HCT116 (cell line): ENCODE measurements at regions of chr10 and their contacts with region 1.

Region 1: GRCh38 chr10:50624866-50625692 is 1.3 kb upstream of the SGMS1 start:
- DNase-seq: peak; percentile 41
- ATAC-seq: peak; percentile 71
- H3K4me3 ChIP-seq: peak overlapping the region; percentile 64 to 85
- H3K27ac ChIP-seq: peak overlapping the region; percentile 96
- H3K4me1 ChIP-seq: peaks cover 16 to 27% of the 10 kb centered on the region in 2 experiments
- H3K27me3 ChIP-seq: no peaks in the 10 kb centered on the region
- CTCF ChIP-seq: peak; percentile 17 to 53 (median 46); a peak in 4 of 6 replicates
- POLR2A ChIP-seq: peak; percentile 78
- RAD21 ChIP-seq: peak; percentile 30; the same call in 1 of the 2 replicates

Region 2: DNA sequence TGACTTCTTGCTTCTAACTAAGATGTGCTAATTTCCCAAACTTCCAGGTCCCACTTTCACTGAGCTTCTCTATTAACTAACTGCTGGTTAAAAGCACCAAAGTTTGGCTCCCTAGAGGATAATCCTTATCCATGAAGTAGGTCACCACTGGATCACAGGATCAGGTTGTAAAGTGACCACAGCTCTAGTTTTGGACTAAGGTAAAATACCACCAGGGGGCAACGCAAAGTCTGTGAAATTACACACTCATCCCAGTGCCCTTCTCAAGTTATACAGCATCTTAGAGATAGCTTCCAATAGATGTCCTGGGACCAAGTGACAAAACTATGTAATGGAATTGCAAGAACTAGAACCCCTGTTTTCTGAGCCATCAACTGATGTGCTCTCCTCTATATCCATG is 257.3 kb before region 1 on chr10:
- CTCF ChIA-PET with region 1: interaction called, 5 read pairs
- POLR2A ChIA-PET with region 1: no interaction called
- RAD21 ChIA-PET with region 1: interaction called, 3 read pairs
- intact Hi-C with region 1: loop called (anchors 2 kb)
- DNase-seq: peak; percentile 31
- ATAC-seq: peak; percentile 91
- H3K4me3 ChIP-seq: no peak overlapping the region
- H3K27ac ChIP-seq: no peak overlapping the region
- H3K4me1 ChIP-seq: peaks cover 0 to under 1% of the 10 kb centered on the region in 2 experiments; a peak in 1 of 4 replicates
- H3K27me3 ChIP-seq: no peaks in the 10 kb centered on the region
- CTCF ChIP-seq: peak; percentile 48 to 70 (median 57); a peak in 5 of 6 replicates
- POLR2A ChIP-seq: no peak
- RAD21 ChIP-seq: peak; percentile 62

Region 3: DNA sequence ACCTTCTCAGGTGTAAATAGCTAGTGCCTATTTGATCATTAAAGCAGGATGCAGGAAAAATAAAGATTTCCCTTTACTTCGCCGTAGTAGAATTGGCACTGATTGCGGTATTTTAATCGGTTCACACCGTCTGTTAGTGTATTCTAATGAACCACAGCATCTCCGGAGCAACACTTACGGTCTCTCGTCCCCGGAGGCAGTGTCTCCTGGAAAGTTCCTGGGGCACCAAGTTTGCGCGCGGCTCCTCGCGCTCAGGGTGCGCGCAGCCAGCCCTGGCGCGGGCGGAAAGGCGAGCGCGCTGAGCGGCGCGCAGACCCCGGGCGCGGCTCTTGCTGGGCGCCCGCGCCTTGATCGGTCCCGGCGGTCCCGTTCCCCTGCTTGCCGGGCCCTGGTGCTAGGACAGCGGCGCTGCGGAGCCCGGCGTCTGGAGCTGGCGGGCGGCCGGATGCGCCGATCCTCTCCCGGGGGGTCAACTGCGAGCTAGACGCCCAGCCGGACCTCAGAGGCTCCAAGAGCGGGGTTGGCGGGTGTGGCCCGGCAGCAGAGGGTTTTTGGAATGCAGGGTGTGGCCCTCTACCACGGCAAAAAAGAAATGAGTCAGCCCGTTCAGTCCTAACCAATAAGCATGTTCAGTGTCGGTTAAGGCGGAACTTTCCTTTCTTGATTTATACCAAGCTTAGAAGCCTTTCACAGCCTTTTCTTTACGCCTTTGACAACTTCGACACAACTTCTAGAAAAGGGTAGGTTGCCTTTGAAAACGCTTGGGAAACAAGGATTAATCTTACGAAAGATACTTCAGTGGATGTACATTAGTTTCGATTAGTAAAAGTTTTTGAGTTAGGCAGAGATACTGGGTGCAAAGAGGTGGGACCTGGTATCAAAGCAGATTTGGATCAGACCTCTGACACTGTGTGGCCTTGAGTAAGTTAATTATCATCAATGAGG is 206.9 kb before region 1 on chr10:
- CTCF ChIA-PET with region 1: no interaction called
- POLR2A ChIA-PET with region 1: no interaction called
- RAD21 ChIA-PET with region 1: no interaction called
- intact Hi-C with region 1: loop called (anchors 5 kb)
- DNase-seq: peak; percentile 86
- ATAC-seq: peak; percentile 93
- H3K4me3 ChIP-seq: peak overlapping the region; percentile 60 to 81
- H3K27ac ChIP-seq: peak overlapping the region; percentile 74
- H3K4me1 ChIP-seq: peaks cover 11 to 40% of the 10 kb centered on the region in 2 experiments
- H3K27me3 ChIP-seq: no peaks in the 10 kb centered on the region
- CTCF ChIP-seq: no peak
- POLR2A ChIP-seq: no peak
- RAD21 ChIP-seq: peak; percentile 27

Region 4: DNA sequence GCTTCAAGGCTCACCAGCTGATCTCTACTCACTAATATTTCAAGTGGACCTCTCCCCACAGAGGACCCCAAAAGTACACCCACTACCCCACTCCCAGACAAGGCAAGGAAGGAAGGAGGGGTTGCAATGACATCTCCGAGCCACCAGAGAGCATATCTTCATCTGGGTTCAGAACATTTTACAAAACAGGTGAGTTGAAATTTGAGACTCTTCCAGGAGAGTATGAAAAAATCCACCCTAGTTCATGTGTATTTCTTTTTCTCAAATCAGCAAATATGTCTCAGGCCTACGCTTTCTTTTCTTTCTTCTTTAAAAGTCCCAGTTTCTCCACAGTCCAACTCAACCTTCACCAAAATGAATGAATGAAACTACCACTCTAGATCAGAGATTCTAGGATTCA is 63.3 kb before region 1 on chr10:
- CTCF ChIA-PET with region 1: no interaction called
- POLR2A ChIA-PET with region 1: no interaction called
- RAD21 ChIA-PET with region 1: no interaction called
- intact Hi-C with region 1: loop called (anchors 2 kb)
- DNase-seq: no peak
- ATAC-seq: peak; percentile 78
- H3K4me3 ChIP-seq: no peak overlapping the region
- H3K27ac ChIP-seq: no peak overlapping the region
- H3K4me1 ChIP-seq: peaks cover 0 to 6% of the 10 kb centered on the region in 2 experiments; a peak in 2 of 4 replicates
- H3K27me3 ChIP-seq: no peaks in the 10 kb centered on the region
- CTCF ChIP-seq: peak; percentile 54 to 75 (median 64); a peak in 5 of 6 replicates
- POLR2A ChIP-seq: no peak
- RAD21 ChIP-seq: peak; percentile 69